HEK293 (cell line): ENCODE measurements at regions of chr6 and their contacts with region 1.

Region 1: DNA sequence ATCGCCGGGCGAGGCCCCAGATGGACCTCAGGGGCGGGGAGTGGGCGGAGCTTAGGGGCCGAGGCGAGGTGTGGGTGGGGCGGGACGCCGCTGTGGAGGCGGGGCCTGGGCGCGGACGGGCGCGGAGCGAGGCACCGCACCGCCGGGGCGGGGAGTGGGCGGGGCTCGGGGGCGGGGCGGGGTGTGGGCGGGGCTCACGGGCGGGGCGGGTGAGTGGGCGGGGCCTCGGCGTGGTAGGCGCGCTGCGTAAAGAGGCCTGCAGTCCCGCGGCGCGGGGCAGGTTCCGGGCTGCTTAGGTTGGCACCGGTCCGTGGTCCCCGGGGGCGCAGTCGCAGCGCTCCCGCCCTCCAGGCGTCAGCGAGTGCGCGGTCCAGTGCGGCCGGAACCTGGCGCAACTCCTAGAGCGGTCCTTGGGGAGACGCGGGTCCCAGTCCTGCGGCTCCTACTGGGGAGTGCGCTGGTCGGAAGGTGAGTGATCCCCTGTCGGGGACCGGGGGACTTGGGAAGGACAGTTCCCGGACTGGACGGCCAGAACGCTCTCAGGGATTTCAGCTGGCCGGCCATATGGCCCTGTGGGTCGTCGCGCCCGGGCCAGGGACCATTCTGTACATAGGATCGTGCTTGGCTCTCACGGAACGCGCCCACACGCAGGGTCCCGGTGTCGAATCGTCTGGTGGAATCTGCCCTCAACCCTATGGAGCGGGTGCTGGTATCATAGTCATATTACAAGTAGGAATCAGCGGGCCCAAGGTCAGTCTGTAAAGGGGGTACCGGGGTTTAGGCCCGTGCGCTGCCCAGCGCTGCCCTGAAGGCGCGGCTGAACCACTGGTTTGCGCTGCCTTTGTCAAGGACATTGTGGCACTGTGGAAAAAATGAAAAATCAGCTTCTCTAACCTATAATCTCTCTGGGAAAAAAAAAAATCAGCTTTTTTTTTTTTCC is at the start of gene NQO2:
- H3K4me3 ChIP-seq: peak within 1 kb of the TSS; percentile 79
- H3K27ac ChIP-seq: peak within 1 kb of the TSS; percentile 63; the same call in 1 of the 2 replicates
- H3K4me1 ChIP-seq: no peaks in the 10 kb centered on the region
- CTCF ChIP-seq: peak; percentile 70

Region 2: DNA sequence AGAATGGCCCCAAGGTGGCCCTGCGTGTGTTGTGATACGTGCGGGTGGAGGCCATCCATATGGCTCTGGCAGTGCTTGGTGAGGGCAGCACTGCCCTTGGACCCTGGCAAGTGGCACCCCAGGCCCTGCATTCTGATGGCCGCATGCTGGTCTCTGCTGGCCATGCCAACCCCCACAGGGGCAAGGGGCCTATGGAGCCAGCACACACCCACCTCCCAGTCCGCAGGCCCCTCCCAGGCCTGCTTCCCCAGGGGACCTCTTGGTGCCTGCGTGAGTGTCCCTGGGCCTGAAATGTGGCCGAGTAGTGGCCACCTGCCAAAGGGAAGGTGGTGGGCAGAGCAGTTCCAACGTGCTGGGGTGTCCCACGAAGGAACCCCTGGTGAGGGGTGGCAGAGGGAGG is 17.4 kb after region 1 on chr6:
- CTCF ChIA-PET with region 1: interaction called, 12 read pairs
- POLR2A ChIA-PET with region 1: interaction called, 8 read pairs
- H3K4me3 ChIP-seq: no peak overlapping the region
- H3K27ac ChIP-seq: no peak overlapping the region
- H3K4me1 ChIP-seq: no peaks in the 10 kb centered on the region
- CTCF ChIP-seq: no peak

Region 3: DNA sequence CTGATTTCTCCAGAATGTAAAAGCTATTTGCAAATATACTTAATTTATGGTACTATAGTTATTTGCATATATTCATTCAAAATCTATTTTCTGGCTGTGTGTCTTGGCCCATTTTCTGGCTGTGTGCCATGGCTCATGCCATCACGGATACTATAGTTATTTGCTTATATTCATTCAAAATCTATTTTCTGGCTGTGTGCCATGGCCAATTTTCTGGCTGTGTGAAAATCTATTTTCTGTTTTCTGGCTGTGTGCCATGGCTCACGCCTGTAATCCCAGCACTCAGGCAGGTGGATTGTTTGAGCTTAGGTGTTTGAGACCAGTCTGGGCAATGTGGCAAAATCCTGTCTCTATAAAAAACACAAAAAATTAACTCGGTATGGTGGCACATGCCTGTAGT is 39.5 kb after region 1 on chr6:
- CTCF ChIA-PET with region 1: interaction called, 16 read pairs
- POLR2A ChIA-PET with region 1: interaction called, 5 read pairs
- H3K4me3 ChIP-seq: no peak overlapping the region
- H3K27ac ChIP-seq: no peak overlapping the region
- H3K4me1 ChIP-seq: peaks cover 11% of the 10 kb centered on the region
- CTCF ChIP-seq: no peak

Region 4: GRCh38 chr6:3057063-3057770 is 57.3 kb after region 1 on chr6:
- CTCF ChIA-PET with region 1: interaction called, 71 read pairs
- POLR2A ChIA-PET with region 1: interaction called, 3 read pairs
- H3K4me3 ChIP-seq: no peak overlapping the region
- H3K27ac ChIP-seq: no peak overlapping the region
- H3K4me1 ChIP-seq: no peaks in the 10 kb centered on the region
- CTCF ChIP-seq: no peak